Colonic mucosa (tissue), 4 donors: ENCODE measurements at regions of chr9 and their contacts with region 1.

Region 1: DNA sequence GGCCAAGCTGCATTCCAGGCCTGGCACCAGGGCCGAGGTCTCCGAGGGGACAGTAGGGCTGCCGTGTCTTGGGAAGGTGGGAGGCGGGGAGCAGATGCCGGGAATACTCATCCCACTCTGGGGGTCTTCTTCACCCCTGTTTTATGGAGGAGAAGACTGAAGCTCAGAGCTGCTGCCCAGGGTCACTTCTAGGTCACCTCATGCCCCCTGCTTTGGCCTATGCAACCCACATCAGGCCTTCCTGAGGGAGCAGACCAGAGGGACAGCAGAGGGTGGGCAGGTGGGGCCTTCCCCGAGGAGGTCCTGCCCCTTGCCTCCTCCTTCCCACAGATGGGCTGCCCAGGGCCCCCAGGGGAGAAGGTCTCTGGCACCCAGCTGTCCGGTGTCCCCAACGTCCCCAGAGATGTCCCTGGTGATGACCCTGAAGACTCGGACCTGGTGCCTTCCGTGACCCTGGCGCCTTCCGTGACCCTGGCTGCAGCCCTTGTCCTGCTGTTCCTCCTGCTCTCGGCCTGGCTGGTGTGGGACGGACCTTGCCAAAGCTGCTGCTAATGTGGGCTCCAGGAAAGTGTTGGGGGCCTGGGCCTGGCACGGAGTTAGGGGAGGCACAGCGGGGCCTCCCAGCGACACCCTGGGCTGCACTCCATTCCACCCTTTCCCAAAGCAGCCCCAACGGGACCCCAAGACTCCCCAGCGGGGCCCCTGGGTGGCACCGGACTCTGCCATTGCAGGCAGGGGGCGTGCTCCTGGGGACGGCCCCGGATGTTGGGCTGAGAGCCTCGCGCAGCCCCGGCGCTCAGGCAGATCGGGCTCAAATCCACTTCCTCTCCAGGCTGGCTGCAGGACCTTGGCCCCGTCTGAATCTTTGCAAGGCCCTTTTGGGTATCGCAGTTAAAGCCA is 6.7 kb upstream of the SLC2A6 start:
- DNase-seq: no peak
- H3K4me3 ChIP-seq: peak overlapping the region; percentile 7
- H3K27ac ChIP-seq: no peak overlapping the region
- H3K4me1 ChIP-seq: no peaks in the 10 kb centered on the region
- H3K27me3 ChIP-seq: no peaks in the 10 kb centered on the region
- CTCF ChIP-seq: no peak

Region 2: DNA sequence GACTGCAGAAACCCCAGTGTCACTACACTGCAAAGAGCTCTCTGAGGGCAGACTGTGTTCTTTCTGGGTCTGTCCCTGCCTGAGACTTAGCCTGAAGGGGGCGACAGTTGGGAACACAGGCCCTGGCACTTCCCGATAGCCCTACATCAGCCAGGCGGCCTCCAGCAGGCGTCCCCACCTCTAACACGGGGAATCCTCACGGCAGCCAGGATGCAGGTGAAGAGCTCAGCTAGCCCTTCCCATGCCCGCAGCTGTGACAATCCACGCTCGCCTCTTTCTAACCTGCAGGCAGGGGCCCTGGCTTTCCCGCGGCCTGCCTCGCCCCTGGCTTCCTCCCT is 143.6 kb before region 1 on chr9:
- intact Hi-C with region 1: no loop called
- DNase-seq: no peak
- H3K4me3 ChIP-seq: no peak overlapping the region
- H3K27ac ChIP-seq: no peak overlapping the region
- H3K4me1 ChIP-seq: peaks cover 7% of the 10 kb centered on the region
- H3K27me3 ChIP-seq: no peaks in the 10 kb centered on the region
- CTCF ChIP-seq: no peak

Region 3: DNA sequence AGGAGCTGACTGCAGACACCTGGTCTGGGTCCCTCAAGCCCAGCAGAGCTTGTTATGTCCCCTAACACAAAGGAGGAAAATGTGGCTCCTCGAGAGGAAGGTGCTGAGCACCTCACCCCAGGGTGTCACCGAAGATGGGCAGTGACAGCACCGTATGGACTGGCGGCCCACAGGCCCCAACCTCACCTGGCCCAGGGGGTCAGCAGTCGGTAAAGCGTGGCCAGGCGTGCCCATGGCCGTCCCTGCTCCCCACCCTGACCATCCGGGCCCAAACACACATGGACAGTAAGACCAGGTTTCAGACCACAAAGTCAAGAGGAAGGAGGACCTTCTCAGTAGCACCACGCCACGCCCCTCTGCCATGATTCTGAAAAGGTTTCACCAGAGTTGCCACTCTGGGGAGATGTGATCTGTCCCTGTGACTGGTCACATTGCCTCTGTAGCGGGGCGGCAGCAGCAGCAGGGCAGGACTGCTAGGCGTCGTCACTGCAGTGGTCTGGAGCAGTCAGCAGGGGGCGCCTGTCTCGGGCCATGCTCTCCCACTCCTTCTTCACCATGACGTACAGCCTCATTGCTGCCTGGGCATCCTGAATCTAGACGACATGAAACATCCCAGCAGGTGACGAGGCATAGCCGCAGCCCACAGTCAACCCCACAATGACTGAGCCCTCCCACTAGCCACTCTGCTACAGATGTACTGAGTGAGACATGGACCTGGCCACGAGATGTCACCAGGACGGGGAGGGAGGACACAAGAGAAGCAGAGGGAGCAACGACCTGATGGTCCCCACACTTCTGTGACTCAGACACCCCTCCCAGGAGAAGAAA is 78.9 kb before region 1 on chr9:
- intact Hi-C with region 1: loop called (anchors 2 kb)
- DNase-seq: peak; percentile 76
- H3K4me3 ChIP-seq: no peak overlapping the region
- H3K27ac ChIP-seq: no peak overlapping the region
- H3K4me1 ChIP-seq: no peaks in the 10 kb centered on the region
- H3K27me3 ChIP-seq: no peaks in the 10 kb centered on the region
- CTCF ChIP-seq: peak; percentile 87